GM13976 (cell line): ENCODE measurements at regions of chr11 and their contacts with region 1.

Region 1: GRCh38 chr11:33857933-33858371 is 33.9 kb downstream of the LMO2 start:
- DNase-seq: peak; percentile 77
- CTCF ChIP-seq: peak; percentile 87

Region 2: GRCh38 chr11:33970984-33971466 is 113.1 kb after region 1 on chr11:
- in situ Hi-C with region 1: loop called (anchors 5 kb)
- DNase-seq: peak; percentile 79
- CTCF ChIP-seq: peak; percentile 52

Region 3: DNA sequence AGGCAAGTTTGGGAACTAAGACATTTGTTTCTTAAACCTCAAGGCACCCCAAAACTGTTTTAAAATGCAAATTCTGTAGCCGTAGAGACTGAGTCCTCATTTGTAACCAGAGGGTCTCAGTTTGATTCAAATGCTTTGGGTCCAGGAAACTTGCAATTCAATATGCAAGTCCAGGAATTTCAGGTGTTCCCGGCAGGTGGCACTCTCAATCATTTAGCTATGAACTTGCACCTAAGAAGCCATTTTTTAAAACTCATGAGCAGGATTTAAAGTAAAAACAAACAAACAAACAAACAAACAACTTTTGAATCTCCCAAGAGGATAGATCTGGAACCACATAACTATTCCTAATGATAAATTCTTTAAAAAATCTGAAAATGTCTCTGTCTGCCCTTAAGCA is 508.6 kb after region 1 on chr11:
- in situ Hi-C with region 1: loop called (anchors 10 kb)
- DNase-seq: peak; percentile 46
- CTCF ChIP-seq: no peak